A673 (cell line): ENCODE measurements at regions of chr1 and their contacts with region 1.

Region 1: GRCh38 chr1:100459358-100460114 is 78.4 kb upstream of the GPR88 start:
- DNase-seq: peak; percentile 86
- H3K4me3 ChIP-seq: no peak overlapping the region
- H3K27ac ChIP-seq: no peak overlapping the region
- H3K4me1 ChIP-seq: peaks cover 11% of the 10 kb centered on the region
- H3K27me3 ChIP-seq: no peaks in the 10 kb centered on the region
- CTCF ChIP-seq: peak; percentile 88

Region 2: GRCh38 chr1:99969729-99970621 is 489.6 kb before region 1 on chr1 and contains the start of gene SLC35A3:
- CTCF ChIA-PET with region 1: no interaction called
- POLR2A ChIA-PET with region 1: no interaction called
- intact Hi-C with region 1: loop called (anchors 5 kb)
- DNase-seq: peak; percentile 82
- H3K4me3 ChIP-seq: peak within 1 kb of the TSS; percentile 94
- H3K27ac ChIP-seq: peak within 1 kb of the TSS; percentile 82
- H3K4me1 ChIP-seq: peaks cover 6% of the 10 kb centered on the region
- H3K27me3 ChIP-seq: no peaks in the 10 kb centered on the region
- CTCF ChIP-seq: no peak
- total RNA-seq, gene SLC35A3: 24.1 and 25.0 TPM in 2 replicates

Region 3: DNA sequence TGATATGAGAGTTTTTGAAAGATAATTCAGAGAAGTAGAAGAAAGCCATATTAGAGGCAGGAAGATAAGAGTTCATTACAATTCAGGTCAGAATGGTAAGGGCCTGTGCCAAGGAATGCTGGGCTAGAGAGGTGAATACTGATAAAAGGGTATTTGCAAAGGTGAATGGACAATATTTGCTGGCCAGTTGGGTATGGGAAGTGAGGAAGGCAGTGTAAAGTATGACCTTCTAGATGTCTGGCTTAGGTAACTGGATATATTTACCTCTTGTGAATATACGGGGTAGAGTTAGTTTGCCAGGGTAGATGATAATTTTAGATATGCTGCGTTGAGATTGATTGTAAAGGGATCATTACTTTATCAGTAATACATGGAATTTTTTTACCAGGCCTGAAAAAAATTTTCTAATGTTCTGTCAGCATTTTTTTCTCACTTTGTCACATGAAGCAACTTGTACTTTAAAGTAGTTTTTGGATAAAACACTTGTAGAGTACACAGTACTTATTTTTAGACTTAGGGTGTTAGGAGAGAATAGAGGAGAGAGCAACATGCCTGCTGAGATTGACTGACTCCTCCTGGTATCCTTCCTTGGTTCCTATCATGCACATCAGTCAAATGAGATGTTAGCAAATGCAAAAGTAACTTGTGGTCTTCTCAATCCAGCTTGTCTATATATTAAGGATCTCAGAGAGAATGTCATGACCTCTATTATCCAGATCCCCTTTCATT is 179.4 kb before region 1 on chr1:
- CTCF ChIA-PET with region 1: interaction called, 5 read pairs
- POLR2A ChIA-PET with region 1: no interaction called
- intact Hi-C with region 1: loop called (anchors 10 kb)
- DNase-seq: no peak
- H3K4me3 ChIP-seq: no peak overlapping the region
- H3K27ac ChIP-seq: peak overlapping the region; percentile 12
- H3K4me1 ChIP-seq: peaks cover 10% of the 10 kb centered on the region
- H3K27me3 ChIP-seq: no peaks in the 10 kb centered on the region
- CTCF ChIP-seq: no peak

Region 4: DNA sequence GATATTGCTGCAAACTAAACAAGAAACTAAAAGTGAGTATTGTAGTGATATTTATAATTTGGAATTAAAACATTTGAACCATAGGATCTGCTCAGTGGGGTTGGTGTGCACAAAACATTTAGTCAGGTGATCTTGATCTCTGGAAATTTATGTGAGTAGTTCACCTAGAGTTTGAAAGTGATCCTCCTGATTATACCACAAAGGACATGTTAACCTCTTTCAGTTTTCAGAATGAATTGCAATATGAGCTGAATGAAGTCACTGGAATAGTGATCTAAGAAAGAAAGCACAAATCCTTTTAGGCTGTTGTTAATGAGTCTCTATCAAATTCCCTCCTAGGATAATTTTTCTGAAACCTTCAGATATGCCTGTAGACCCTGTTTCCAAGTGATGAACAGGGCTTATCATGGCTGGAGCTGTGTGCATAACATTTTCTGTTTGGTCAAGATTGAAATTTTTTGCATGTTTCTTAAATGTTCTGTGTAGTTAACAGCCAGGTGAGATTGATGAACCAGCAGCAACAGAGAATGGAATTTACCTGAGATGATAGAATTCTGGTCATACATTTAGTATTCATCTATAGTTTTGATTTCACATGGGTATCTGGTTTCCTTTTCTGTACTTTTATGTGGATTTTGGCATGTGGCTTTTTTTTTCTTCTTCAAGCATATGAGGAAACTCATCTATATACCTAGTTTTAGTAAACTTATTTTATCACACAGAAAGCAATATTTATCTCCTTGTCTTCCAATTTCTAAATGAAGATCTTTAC is 81.8 kb before region 1 on chr1:
- CTCF ChIA-PET with region 1: no interaction called
- POLR2A ChIA-PET with region 1: no interaction called
- intact Hi-C with region 1: no loop called
- DNase-seq: no peak
- H3K4me3 ChIP-seq: no peak overlapping the region
- H3K27ac ChIP-seq: no peak overlapping the region
- H3K4me1 ChIP-seq: no peaks in the 10 kb centered on the region
- H3K27me3 ChIP-seq: no peaks in the 10 kb centered on the region
- CTCF ChIP-seq: no peak

Region 5: DNA sequence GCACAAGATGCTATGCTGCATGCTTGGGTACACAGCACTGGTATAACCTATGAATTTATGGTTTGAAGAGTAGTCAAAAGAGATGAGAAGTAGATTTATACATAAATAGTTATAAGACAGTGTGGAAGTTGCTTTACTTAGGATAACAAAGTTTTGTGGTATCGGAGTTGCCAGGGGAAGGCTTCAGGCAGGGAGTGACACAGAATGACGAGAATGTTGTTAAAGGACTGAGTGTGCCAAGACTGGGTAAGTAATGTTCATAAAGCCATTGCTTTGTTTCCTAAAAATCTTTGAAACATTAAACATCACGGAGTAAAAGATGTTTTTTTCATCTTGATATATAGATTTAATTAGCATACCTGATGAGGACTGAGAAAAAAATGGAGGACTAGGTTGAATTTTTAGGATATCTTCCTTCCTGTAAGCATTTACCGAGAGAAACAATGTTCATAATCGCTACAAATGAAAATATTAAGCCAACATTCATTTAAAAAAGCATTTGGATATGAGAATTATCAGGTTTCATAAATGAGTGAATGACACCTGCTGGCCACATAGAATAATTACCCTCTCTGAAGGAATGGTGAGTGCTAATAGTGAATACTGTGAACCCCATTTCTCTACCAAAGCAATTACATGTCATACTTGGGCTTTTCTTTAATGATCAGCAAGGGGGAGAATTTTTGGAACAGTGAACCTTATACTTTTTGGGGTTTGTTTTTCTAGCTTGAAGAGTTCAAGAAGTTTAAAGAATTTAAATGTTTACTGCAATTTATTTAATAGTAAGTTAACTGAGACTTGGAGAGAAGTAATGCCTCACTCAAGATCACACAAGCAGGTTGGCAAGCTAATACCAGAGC is 406.7 kb after region 1 on chr1:
- CTCF ChIA-PET with region 1: interaction called, 15 read pairs
- POLR2A ChIA-PET with region 1: no interaction called
- intact Hi-C with region 1: loop called (anchors 1 kb)
- DNase-seq: peak; percentile 40
- H3K4me3 ChIP-seq: no peak overlapping the region
- H3K27ac ChIP-seq: no peak overlapping the region
- H3K4me1 ChIP-seq: no peaks in the 10 kb centered on the region
- H3K27me3 ChIP-seq: no peaks in the 10 kb centered on the region
- CTCF ChIP-seq: peak; percentile 68